Activated CD4-positive, alpha-beta T cell treated with anti-CD3 and anti-CD28 coated beads for 36 hours (primary cell): ENCODE measurements at regions of chr18 and their contacts with region 1.

Region 1: DNA sequence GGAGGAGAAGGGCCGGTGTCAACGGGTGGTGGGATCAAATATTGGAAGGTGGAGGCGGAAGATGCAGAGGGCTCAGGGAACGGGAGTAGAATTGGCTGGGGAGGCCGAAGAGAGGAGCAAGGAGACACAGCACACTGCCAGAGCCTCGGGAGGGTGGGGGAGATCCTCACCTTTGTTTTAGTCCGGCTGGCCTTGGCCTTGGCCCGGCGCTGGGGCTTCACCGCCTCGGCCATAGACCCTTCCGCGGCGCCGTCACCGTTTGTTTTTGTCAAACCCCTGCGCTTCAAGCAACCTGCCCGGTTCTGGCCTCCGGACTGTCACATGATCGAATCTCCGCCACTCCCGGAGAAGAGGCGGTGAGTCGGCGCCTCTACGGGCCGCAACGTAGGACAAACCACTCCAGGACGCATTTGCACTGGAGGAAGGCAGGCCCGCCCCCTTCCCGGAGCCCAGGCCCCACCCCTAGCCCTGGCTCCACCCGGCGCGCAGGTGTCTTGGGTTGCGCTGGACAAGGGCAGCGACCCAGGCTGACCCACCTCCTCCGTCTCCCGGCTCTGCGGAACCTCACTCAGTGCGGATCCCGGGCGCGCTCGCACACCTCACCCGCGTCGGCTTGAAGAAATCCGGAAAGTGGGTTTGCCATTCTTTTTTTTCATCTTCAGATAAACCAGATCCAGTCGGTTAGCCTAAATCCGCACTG is at the start of gene EPG5:
- DNase-seq: peak; percentile 97
- ATAC-seq: peak; percentile 96
- H3K4me3 Mint-ChIP-seq: peak within 1 kb of the TSS; percentile 94
- H3K27ac Mint-ChIP-seq: peak within 1 kb of the TSS; percentile 94
- H3K4me1 Mint-ChIP-seq: peaks cover 35% of the 10 kb centered on the region
- H3K27me3 Mint-ChIP-seq: no peaks in the 10 kb centered on the region
- total RNA-seq, gene EPG5: 13.6 to 14.5 TPM

Region 2: DNA sequence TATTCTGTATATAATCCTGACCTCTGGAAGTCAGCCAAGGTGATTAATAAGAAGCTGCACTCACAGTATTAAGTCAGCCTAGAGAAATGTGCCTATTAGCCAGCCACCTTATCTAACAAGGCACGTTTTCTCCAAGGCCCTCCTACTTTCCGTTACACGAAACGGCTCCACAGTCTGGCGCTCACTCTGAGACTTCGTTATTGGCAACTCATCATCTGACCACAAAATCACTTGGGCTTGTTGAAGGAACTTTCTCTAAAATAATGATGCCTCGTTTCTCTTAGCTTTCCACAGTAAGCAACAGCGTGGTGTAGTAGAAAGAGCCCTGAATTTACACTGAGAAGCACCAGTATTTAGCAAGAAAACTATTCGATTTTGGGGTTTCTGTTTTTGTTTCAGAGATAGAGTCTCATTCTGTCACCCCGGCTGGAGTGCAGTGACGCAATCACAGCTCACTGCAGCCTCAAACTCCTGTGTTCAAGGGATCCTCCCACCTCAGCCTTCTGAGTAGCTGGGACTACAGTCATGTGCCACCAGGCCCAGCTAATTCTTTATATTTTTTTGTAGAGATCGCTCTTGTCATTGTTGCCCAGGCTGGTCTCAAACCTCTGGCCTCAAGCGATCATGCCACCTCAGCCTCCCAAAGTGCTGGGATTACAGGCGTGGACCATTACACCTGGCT is 296.7 kb before region 1 on chr18:
- CTCF ChIA-PET with region 1: interaction called, 6 read pairs
- POLR2A ChIA-PET with region 1: interaction called, 4 read pairs
- intact Hi-C with region 1: loop called in 1 of 2 experiments (anchors 1 kb)
- DNase-seq: peak; percentile 79
- ATAC-seq: peak; percentile 73
- H3K4me3 Mint-ChIP-seq: peak overlapping the region; percentile 56
- H3K27ac Mint-ChIP-seq: peak overlapping the region; percentile 85
- H3K4me1 Mint-ChIP-seq: peaks cover 63% of the 10 kb centered on the region
- H3K27me3 Mint-ChIP-seq: no peaks in the 10 kb centered on the region

Region 3: DNA sequence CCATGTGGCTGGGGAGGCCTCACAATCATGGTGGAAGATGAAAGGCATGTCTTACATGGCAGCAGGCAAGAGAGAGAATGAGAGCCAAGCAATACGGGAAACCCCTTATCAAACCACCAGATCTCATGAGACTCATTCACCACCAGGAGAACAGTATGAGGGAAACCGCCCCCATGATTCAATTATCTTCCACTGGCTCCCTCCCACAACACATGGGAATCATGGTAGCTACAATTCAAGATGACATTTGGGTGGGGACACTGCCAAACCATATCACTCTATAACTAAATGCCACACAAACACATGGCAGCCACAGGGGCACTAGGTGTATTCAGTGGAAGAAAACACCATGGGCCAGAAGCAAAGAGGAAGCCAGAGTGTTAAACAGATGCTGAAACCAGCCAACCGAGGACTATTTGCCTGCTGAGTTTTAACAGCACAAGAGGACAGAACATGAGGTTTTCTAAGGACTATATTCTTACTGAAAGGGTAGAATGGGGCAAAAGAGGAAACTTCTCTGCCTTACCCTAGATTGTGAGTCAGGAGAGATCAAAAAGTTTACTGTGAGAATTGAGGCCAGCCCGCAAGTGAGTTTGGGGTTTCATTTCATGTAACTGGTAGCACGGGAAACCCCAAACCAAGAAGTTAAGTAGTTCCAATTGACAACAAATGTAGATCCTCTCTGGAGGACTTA is 92.5 kb before region 1 on chr18:
- CTCF ChIA-PET with region 1: interaction called, 4 read pairs
- POLR2A ChIA-PET with region 1: no interaction called
- intact Hi-C with region 1: loop called (anchors 1 kb)
- DNase-seq: peak; percentile 84
- ATAC-seq: peak; percentile 91
- H3K4me3 Mint-ChIP-seq: peak overlapping the region; percentile 41
- H3K27ac Mint-ChIP-seq: peak overlapping the region; percentile 96
- H3K4me1 Mint-ChIP-seq: peaks cover 34% of the 10 kb centered on the region
- H3K27me3 Mint-ChIP-seq: no peaks in the 10 kb centered on the region

Region 4: GRCh38 chr18:46028536-46028891 is 61.4 kb after region 1 on chr18:
- CTCF ChIA-PET with region 1: no interaction called
- POLR2A ChIA-PET with region 1: no interaction called
- intact Hi-C with region 1: loop called in 1 of 2 experiments (anchors 2 kb)
- DNase-seq: no peak
- ATAC-seq: no peak
- H3K4me3 Mint-ChIP-seq: peak overlapping the region; percentile 71
- H3K27ac Mint-ChIP-seq: peak overlapping the region; percentile 89
- H3K4me1 Mint-ChIP-seq: peaks cover 12% of the 10 kb centered on the region
- H3K27me3 Mint-ChIP-seq: peaks cover 9% of the 10 kb centered on the region

Region 5: DNA sequence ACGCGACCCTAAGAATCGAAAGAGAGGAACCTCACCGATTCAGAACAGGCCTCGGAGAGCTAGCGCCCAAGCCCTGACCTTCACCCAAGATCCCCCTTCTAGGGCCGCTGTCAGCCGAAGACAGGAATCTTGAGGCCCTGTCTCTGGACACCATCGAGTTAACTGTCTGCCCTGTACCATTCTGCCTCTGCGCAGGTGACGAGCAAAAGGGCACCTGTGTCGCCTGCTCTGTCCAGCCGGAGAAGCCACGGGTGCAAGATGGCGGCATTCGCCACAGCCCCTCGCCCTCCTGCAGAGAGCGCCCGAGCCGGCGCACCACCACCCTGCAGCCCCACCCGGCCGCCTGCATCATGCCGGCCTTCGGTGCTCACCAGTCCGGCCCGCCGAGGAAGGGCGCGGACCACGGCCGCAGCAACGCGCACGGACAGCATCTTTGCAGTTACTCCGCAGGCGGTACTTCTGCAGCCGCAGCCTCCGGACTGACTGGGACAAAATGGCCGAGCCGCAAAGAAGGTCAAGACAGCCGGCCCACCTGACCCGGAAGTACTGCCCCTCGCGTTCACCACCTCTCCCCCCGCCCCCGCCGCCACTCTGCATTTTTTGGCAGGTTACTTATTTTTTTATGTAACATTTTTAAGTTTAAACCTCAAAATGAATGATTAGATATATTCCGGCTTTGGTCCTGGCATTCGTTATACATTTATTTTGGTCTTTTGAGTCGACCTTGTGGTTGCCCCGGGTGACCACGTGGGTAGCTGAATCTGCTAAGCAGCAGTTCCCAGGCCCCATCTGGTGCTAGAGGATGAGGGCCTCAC is 130.9 kb after region 1 on chr18 and contains the start of gene ATP5F1A:
- CTCF ChIA-PET with region 1: interaction called, 3 read pairs
- POLR2A ChIA-PET with region 1: no interaction called
- intact Hi-C with region 1: loop called in 1 of 2 experiments (anchors 1 kb)
- DNase-seq: peak; percentile 94
- ATAC-seq: peak; percentile 91
- H3K4me3 Mint-ChIP-seq: peak within 1 kb of the TSS; percentile 97
- H3K27ac Mint-ChIP-seq: peak within 1 kb of the TSS; percentile 99
- H3K4me1 Mint-ChIP-seq: peaks cover 31% of the 10 kb centered on the region
- H3K27me3 Mint-ChIP-seq: no peaks in the 10 kb centered on the region
- total RNA-seq, gene ATP5F1A: 375 to 515 TPM